ENCODE measurements at regions of chr17 and their contacts with region 1.

Region 1: DNA sequence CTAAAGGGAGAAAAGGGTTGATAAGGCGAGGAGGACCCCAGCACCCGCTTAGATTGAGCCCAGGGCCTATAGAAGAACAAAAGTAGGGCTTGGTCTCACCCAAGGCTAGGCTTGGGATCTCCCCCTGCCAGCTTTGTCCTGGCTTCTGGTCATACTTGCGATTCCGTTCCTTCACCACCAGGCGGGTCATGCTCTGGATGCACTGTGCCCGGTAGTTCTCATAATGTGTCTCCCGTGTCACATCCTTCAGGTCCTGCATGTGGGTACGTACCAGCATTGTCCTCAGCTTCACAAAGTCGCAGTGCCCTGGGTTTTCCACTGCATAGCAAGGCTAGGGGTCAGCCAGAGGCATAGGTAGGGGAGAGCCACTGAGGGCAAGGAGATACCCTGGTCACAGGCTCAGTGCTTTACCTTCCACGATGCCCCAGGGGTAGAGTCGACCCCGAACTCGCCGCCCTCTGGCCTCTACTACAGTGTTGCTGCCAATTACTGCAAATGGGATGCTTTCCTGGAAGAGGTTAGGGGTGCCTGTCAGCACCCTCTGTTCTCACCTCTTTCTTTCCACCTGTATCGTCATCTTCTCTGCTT is 6.5 kb upstream of the MTMR4 start:
- DNase-seq: no peak
- ATAC-seq: no peak
- H3K4me3 ChIP-seq: no peak overlapping the region
- H3K27ac ChIP-seq: peak overlapping the region; percentile 92
- H3K4me1 ChIP-seq: peaks cover 17% of the 10 kb centered on the region
- H3K27me3 ChIP-seq: no peaks in the 10 kb centered on the region
- CTCF ChIP-seq: peak; percentile 37

Region 2: GRCh38 chr17:58991718-58992331 is 470.9 kb after region 1 on chr17:
- intact Hi-C with region 1: loop called (anchors 10 kb)
- DNase-seq: no peak
- ATAC-seq: peak; percentile 94
- H3K4me3 ChIP-seq: no peak overlapping the region
- H3K27ac ChIP-seq: peak overlapping the region; percentile 58
- H3K4me1 ChIP-seq: no peaks in the 10 kb centered on the region
- H3K27me3 ChIP-seq: no peaks in the 10 kb centered on the region
- CTCF ChIP-seq: no peak